ENCODE measurements at regions of chr16 and their contacts with region 1.

Region 1: GRCh38 chr16:85010931-85011845 is at the start of gene ZDHHC7:
- DNase-seq: peak; percentile 96
- H3K4me3 Mint-ChIP-seq: peak within 1 kb of the TSS; percentile 98
- H3K27ac Mint-ChIP-seq: peak within 1 kb of the TSS; percentile 99
- H3K4me1 Mint-ChIP-seq: peaks cover 24% of the 10 kb centered on the region
- H3K27me3 Mint-ChIP-seq: peaks cover 4% of the 10 kb centered on the region
- total RNA-seq, gene ZDHHC7: 28.9 and 30.8 TPM in 2 replicates

Region 2: DNA sequence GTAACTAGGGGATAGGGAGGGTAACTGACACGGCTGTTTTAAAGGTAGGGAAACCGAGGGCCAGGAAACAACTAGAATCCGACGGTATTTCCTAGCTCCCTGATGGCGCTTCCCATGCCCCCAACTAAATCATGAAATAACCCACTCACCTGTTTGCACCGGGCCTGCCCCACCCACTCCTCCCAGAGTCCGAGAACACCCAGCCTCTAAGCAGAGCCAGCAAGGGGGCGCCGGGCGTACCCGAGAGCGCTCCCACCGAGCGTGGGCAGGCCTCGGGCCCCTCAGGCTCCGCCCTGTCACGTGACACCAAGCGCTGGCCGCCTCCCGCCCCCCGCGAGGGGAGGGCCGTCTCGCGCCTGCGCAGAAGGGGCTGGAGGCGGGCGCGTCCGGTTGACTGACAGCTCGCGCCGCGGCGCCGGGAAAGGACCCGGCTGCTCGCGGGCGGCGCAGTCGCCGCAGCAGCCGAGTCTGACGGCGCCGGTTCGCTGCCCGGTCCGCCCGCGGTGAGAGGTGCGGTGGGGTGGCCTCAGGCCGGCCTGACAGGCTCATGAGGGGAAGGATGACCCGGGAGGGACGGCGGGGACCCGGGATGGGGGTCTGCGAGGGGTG is 16.3 kb after region 1 on chr16 and contains the start of gene KIAA0513:
- intact Hi-C with region 1: loop called (anchors 1 kb)
- DNase-seq: peak; percentile 99
- H3K4me3 Mint-ChIP-seq: peak within 1 kb of the TSS; percentile 89
- H3K27ac Mint-ChIP-seq: peak within 1 kb of the TSS; percentile 93
- H3K4me1 Mint-ChIP-seq: peaks cover 36% of the 10 kb centered on the region
- H3K27me3 Mint-ChIP-seq: peaks cover 1% of the 10 kb centered on the region
- total RNA-seq, gene KIAA0513: 10.6 and 12.1 TPM in 2 replicates

Region 3: DNA sequence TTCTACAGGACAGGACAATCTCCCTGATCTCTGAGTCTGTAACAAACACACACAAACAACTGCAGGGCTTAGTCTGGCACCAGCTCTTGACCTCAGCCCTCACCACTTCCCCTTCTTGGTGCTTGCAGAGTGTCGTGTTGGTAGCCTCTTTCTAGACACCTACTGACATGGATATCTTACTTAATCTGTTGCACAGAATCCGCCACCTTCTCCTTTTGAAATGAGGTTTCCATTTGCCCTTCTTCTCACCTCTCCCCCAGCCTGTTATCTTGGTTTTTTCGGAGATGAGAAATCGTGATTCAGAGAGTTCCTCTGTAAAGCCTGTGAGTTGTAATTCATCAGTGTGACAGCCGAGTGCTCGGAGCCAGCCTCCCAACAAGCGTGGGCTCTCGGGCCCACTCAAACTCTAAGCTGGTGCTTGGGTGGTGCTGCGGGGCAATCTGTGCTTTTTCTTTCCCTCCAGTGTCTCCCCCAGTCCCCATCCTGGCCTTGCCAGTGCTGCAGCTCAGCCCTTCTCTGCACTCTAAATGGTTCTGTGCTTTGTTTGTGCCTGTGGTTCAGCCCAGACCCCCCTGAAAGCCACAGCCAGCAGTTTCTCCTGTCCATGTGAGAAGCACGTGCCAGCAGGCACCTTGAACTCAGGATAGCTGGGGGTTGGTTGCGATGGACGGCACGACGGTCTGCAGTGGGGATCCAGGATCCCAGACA is 44.5 kb after region 1 on chr16:
- intact Hi-C with region 1: loop called (anchors 1 kb)
- DNase-seq: peak; percentile 93
- H3K4me3 Mint-ChIP-seq: peak overlapping the region; percentile 71
- H3K27ac Mint-ChIP-seq: peak overlapping the region; percentile 93
- H3K4me1 Mint-ChIP-seq: peaks cover 35% of the 10 kb centered on the region
- H3K27me3 Mint-ChIP-seq: no peaks in the 10 kb centered on the region

Region 4: DNA sequence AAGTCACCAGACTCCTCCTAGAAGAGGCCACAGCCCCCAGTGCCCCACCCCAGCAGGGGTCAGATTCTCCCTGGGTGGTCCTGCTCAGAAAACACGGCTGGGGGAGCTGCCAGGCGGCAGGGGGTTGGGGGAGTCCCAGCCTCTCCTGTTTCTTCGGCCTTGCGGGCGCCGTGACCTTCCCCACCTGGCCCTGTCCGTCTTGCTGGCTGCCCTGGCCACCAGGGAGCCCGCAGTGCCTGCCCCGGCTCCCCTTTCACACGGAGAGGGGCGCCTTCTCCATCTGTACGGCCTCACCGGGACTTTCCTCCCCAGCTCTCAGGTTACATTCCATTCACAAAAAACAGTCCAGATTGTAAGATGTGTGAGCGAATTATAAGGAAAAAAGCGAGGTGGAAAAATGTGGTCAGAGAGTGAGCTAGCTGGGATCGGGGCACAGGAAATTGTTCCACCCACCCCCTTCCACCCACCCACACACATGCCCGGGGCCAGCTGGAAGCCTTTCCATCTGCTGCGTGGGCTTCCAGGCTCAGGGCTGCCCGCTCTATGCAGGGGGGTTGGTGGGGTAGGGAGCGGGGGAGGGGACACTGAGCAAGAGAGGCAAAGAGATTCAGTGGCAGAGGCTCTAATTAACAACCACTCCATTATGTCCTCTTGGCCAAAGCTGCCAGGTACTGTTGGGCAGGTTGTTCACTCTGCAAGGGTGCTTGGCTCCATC is 115.7 kb after region 1 on chr16:
- intact Hi-C with region 1: no loop called
- DNase-seq: no peak
- H3K4me3 Mint-ChIP-seq: peak overlapping the region; percentile 30
- H3K27ac Mint-ChIP-seq: peak overlapping the region; percentile 63
- H3K4me1 Mint-ChIP-seq: peaks cover 9% of the 10 kb centered on the region
- H3K27me3 Mint-ChIP-seq: peaks cover 3% of the 10 kb centered on the region